Heart left ventricle (tissue), 16 donors: ENCODE measurements at regions of chr18 and their contacts with region 1.

Region 1: DNA sequence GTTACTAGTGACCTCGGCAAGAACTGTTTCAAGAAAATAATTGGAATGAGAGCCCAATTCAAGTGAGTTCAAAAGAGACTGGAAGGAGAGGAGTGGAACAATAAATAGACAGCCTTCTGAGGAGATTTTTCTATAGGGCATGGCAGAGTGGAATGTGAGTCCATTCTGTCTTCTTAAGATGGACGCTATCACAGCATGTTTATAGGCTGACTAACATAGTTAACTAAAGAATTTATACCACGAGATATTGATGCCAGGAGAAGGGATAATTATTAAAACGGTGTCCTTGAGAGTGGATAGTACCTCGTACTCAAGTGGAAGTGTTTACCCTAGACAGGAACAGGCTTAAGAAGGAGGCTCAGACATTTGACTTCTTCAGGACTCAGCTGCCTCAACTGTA is 143.5 kb upstream of the RBBP8 start:
- DNase-seq: no peak
- ATAC-seq: no peak
- H3K4me3 ChIP-seq: no peak overlapping the region
- H3K27ac ChIP-seq: no peak overlapping the region
- H3K4me1 ChIP-seq: no peaks in the 10 kb centered on the region
- H3K27me3 ChIP-seq: no peaks in the 10 kb centered on the region
- CTCF ChIP-seq: no peak
- POLR2A ChIP-seq: no peak

Region 2: GRCh38 chr18:22609642-22610041 is 180.0 kb before region 1 on chr18:
- intact Hi-C with region 1: loop called in 2 of 10 experiments (anchors 10 kb)
- DNase-seq: peak; percentile 67 to 79 (median 76)
- ATAC-seq: peak; percentile 25 to 60 (median 49)
- H3K4me3 ChIP-seq: no peak overlapping the region
- H3K27ac ChIP-seq: peak overlapping the region; percentile 12 to 74 (median 50)
- H3K4me1 ChIP-seq: peaks cover 0 to 58% (median 30%) of the 10 kb centered on the region in 12 donors
- H3K27me3 ChIP-seq: no peaks in the 10 kb centered on the region
- CTCF ChIP-seq: no peak
- POLR2A ChIP-seq: no peak

Region 3: DNA sequence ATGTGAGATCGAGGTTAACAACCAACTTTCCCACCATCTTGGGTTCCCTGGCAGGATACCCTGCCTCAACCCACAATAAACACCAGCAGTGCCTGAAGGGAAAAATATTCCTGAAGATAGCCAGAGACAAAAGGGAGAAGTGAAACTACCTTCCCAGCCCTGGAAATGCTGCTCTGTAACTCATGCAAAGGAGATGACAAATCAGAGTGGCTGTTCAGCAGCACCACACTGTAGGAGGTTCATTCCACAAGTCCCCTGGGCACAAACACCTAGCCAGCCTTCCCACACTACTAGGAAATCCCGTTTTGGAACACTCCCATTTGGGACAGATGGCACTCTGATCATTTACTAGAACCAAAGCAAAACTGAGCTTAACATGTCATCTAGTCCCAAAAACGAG is 47.2 kb before region 1 on chr18:
- intact Hi-C with region 1: loop called in 1 of 10 experiments (anchors 10 kb)
- DNase-seq: no peak
- ATAC-seq: no peak
- H3K4me3 ChIP-seq: no peak overlapping the region
- H3K27ac ChIP-seq: no peak overlapping the region
- H3K4me1 ChIP-seq: peaks cover 0 to 7% (median 0%) of the 10 kb centered on the region in 12 donors
- H3K27me3 ChIP-seq: no peaks in the 10 kb centered on the region
- CTCF ChIP-seq: no peak
- POLR2A ChIP-seq: no peak

Region 4: DNA sequence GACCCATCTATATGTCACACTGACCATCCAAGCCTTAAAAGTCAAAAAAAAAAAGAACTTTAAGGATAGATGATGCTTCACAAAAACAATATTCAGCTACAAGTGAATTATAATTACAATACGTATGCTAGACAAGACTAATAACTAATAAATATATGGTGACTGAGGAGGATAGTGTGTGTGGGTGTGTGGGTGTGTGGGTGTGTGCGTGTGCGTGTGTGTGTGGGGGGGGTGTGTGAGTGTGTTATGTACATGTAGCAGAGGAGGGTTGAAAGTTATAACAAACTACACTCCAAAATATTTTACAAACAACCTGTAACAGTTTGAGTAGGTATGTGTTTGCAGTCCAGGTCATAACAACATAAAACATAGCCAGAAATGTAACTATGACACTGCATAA is 15.7 kb before region 1 on chr18:
- intact Hi-C with region 1: no loop called
- DNase-seq: no peak
- ATAC-seq: no peak
- H3K4me3 ChIP-seq: no peak overlapping the region
- H3K27ac ChIP-seq: no peak overlapping the region
- H3K4me1 ChIP-seq: peaks cover 0 to 10% (median 6%) of the 10 kb centered on the region in 12 donors
- H3K27me3 ChIP-seq: no peaks in the 10 kb centered on the region
- CTCF ChIP-seq: no peak
- POLR2A ChIP-seq: no peak